ENCODE measurements at regions of chr22 and their contacts with region 1.

Region 1: DNA sequence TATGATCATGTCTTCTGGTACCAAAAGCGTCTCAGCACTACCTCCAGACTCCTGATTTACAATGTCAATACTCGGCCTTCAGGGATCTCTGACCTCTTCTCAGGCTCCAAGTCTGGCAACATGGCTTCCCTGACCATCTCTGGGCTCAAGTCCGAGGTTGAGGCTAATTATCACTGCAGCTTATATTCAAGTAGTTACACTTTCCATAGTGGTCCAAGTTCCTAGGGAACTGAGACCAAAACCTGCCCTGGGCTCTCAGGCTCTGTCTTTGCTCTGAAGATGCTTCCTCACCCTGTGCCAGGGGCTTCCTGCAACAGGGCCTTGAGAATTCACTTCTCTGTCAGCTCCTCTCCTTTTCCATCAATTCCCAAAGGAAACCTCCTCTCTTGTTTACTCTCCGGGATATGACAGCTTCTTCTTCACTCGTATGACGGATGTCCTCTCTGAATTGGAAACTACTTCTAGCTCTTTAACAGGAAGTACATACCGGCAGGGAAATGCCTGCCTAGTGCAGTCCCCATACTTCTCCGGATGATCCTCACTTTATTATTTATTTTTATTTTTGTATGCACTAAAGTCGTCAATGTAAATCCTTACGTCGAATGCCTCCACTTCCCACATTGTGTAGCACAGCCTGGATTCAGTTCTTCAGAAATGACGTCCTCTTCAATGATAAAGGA is 29.6 kb upstream of the PRAME start:
- DNase-seq: no peak
- ATAC-seq: no peak
- H3K4me3 ChIP-seq: no peak overlapping the region
- H3K27ac ChIP-seq: no peak overlapping the region
- H3K4me1 ChIP-seq: peaks cover 0 to 3% of the 10 kb centered on the region in 2 experiments; a peak in 1 of 4 replicates
- H3K27me3 ChIP-seq: no peaks in the 10 kb centered on the region
- CTCF ChIP-seq: no peak
- POLR2A ChIP-seq: no peak
- RAD21 ChIP-seq: no peak

Region 2: GRCh38 chr22:22558972-22559603 is 29.5 kb before region 1 on chr22 and contains the start of gene PRAME:
- CTCF ChIA-PET with region 1: interaction called, 10 read pairs
- POLR2A ChIA-PET with region 1: no interaction called
- RAD21 ChIA-PET with region 1: no interaction called
- intact Hi-C with region 1: no loop called
- DNase-seq: peak; percentile 80
- ATAC-seq: peak; percentile 98
- H3K4me3 ChIP-seq: peak within 1 kb of the TSS; percentile 60 to 61
- H3K27ac ChIP-seq: peak within 1 kb of the TSS; percentile 52; the same call in 1 of the 2 replicates
- H3K4me1 ChIP-seq: peaks cover 0 to 11% of the 10 kb centered on the region in 2 experiments; a peak in 2 of 4 replicates
- H3K27me3 ChIP-seq: no peaks in the 10 kb centered on the region
- CTCF ChIP-seq: peak; percentile 98 to 100 (median 99)
- POLR2A ChIP-seq: no peak
- RAD21 ChIP-seq: 0 out of 2 replicates have a peak, but pooled peaks have one; percentile 23
- total RNA-seq, gene PRAME: 28.4 TPM